ENCODE measurements at regions of chr5 and their contacts with region 1.

Region 1: GRCh38 chr5:177446200-177447065 is at the start of gene PRR7:
- DNase-seq: peak in 9 of 10 donors; percentile 59 to 97 (median 76)

Region 2: DNA sequence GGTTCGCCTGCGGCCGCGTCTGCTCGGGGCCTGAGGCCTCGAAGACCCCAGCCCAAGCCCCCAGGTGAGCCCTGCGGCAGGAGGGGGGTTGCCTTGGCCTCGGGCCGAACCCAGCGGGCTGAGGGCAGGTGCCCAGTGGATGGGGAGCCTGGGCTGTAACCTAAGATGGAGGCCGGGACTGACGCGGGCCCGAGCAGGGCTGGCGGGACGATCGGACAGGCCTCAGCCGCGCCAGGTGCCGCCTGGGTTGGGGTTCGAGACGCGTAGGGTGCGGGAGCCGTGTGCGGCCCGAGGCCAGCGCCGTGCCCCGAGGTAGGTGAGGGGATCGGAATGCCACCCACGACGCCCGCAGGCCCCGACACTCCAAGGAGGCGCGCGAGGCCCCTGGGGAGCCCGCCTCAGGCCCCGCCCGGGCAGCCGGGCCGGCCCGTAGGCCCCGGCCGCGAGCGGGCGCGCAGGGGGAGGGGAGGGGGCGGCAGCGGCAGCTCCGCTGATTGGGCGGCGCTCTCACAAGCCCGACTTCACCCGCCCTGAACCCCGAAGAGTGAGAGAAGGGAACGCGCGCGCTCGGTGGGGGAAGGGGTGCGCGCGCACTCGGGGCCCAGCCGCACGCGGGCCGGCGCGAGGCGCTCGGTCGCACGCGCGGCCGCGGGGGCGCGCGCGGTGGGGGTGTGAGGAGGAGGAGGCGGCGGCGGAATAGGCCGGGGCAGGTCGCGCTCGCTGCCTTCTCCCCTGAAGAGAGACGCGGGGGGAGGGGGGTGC is 313.2 kb before region 1 on chr5 and contains the start of gene NSD1:
- intact Hi-C with region 1: loop called (anchors 5 kb)
- DNase-seq: peak; percentile 80 to 99 (median 89)